ENCODE measurements at regions of chr1 and their contacts with region 1.

Region 1: DNA sequence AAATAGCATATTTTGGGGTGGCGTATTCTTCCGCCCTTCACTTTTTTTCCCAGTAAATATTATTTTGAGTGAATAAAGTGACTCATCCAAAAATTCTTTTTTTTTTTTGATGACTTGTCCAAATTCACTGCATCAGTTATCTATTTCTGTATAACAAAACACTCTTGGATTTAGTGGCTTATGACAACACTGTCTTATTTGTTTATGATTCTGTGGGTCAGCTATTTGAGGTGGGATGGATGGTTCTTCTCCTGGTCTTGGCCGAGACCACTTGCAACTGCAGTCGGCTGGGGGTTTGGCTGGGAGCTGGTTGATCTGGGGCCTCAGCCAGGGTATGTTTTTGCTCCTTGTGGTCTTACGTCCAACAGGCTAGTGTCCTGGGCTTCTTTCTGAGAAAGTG is 39.9 kb upstream of the SRSF10 start:
- DNase-seq: peak; percentile 39
- ATAC-seq: peak; percentile 23 to 30

Region 2: DNA sequence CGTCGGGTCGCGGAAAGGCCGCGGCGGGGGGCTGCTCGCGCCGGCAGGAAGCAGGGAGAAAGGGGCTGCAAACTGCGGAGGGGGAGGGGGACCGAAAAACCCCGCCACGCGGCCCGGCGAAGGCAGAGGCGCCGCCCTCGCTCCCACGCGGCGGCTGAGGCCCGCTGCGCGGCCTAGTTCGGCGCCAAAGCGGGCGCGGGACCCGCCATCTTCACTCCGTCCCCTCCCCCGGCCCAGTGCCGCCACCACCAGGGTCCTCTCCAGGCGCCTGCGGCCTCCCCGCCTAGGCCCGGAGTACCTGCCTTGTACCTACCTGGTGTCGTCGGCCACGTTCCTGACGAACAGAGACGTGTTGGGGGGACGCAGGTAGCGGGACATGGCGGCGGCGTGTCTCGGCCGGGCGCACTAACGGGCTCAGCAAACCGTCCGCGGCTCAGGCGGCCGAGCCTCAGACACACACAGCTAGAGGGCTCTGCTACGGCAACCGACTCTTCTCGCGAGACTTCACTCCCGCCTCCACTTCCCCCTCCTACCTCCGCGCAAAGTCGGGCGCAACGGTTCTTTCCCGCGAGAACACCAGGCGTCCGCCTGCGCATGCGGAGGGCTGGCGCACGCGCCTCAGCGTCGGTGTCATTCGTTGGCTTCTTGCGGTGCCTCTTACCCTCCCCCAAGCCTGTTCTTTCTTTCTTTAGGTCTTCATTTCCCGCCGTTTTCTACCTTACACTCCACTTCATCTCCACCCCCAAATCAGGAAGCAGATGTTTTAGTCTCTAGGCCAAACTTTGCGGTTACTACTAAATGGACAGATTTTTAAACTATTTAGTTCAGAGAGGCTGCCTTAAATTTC is 39.9 kb before region 1 on chr1 and contains the start of gene SRSF10:
- intact Hi-C with region 1: loop called in 1 of 2 experiments (anchors 2 kb)
- DNase-seq: peak; percentile 99
- ATAC-seq: peak; percentile 99 to 100
- total RNA-seq, gene SRSF10: 49.5 to 59.3 TPM

Region 3: GRCh38 chr1:24055681-24056080 is 35.7 kb after region 1 on chr1:
- intact Hi-C with region 1: no loop called
- DNase-seq: no peak
- ATAC-seq: no peak

Measured in left cardiac atrium (tissue), 4 donors.